GM12878 (cell line): ENCODE measurements at regions of chr17 and their contacts with region 1.

Region 1: DNA sequence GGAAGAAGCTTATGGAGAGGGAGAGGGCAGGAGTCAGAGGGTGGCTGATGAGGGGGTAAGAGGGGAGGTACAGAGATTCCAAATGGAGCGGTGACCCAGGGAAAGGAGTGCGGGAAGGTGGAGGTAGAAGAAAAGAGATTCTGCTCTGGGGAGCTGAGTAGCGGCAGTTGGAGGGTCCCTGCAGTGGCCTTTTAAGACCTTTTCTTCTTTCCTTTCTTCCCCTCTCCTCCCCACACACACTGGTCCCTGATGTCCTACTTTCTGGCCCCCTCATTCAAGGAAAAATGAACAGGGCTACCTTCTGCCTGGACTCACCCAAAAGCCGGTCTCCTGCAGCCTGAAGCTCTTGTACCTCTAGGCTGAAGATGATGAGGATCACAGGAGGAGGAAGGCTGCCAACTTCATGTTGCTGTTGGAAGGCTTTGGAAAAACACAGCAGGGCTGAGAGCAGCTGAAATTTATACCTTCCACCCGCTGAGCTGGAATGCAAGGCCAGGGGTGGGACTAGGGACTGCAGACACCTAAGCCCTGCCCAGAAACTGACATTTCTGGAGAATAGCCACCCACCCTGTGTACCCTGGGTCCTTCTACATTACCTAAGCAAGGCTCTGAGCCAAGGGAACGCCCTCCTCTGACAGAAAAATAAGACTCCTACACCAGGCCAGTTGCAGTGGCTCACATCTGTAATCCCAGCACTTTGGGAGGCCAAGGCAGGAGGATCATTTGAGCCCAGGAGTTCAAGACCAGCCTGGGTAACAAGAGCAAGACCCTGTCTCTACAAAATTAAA is 9.4 kb upstream of the HEATR6 start:
- DNase-seq: no peak
- ATAC-seq: no peak
- H3K4me3 ChIP-seq: no peak overlapping the region
- H3K27ac ChIP-seq: no peak overlapping the region
- H3K4me1 ChIP-seq: peaks cover 39% of the 10 kb centered on the region
- H3K27me3 ChIP-seq: no peaks in the 10 kb centered on the region
- CTCF ChIP-seq: no peak
- EP300 ChIP-seq: no peak
- POLR2A ChIP-seq: no peak
- RAD21 ChIP-seq: no peak

Region 2: DNA sequence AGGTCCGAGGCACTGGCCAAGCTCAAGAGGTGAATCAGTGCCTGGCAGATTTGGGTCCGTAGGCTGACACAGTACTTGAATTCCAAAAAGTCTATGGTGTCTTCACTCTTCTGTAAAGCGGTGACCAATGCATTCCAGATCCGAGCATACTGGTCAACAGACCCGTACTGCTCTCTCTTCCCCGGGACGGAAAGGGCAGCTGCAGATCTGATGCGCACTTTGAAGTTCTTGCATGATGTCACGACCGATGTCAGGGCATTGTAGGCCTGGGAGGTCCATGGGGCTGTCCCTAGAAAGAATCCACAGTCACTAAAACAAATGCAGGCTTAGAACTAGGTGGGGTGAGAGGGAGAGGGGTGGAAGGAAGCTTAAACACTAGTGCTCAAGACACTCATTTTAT is 44.2 kb before region 1 on chr17:
- CTCF ChIA-PET with region 1: no interaction called
- POLR2A ChIA-PET with region 1: no interaction called
- RAD21 ChIA-PET with region 1: no interaction called
- SMC1A ChIA-PET with region 1: no interaction called
- in situ Hi-C with region 1: no loop called
- intact Hi-C with region 1: no loop called
- DNase-seq: no peak
- ATAC-seq: no peak
- H3K4me3 ChIP-seq: no peak overlapping the region
- H3K27ac ChIP-seq: no peak overlapping the region
- H3K4me1 ChIP-seq: no peaks in the 10 kb centered on the region
- H3K27me3 ChIP-seq: no peaks in the 10 kb centered on the region
- CTCF ChIP-seq: no peak
- EP300 ChIP-seq: no peak
- POLR2A ChIP-seq: no peak
- RAD21 ChIP-seq: no peak

Region 3: DNA sequence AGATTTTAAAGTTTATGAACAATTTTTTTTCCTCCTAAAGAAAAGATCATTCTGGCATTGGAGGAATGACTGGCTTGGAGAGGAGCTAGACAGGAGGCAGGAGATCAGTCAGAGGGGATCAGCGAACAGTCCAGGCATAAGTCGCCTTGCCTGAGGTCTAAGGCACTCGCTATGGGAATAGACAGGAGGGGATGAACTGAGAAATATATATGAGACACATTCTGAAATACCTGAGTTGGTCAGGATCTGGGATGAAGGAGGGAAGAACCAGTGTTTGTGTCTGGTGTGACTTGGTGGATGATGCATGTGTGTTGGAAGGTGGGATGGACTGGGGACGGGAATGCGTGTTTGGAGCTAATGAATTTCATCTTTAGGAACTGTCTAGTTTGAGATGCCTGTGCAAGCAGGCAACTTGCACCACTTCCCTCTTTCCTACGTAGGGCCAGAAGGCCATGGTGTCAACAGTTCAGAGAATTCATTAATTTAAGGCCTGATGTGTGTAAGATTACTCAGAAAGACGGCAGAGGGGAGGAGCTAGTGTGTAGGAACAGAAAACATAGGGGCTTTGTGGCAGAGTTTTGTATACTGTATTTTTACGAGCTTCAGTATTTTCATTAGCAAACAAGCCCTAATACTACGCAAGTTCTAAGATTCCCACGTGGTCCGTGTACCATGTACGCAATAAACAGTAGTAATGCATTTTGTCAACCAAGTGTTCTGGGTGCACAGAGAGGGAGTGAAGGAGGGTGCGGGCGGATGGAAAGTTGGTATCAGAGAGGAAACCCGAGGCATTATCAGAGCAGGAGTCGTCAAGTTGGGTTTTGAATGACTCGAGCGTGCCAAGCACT is 10.2 kb before region 1 on chr17:
- CTCF ChIA-PET with region 1: interaction called, 46 read pairs
- POLR2A ChIA-PET with region 1: interaction called, 42 read pairs
- RAD21 ChIA-PET with region 1: interaction called, 17 read pairs
- SMC1A ChIA-PET with region 1: interaction called, 31 read pairs
- in situ Hi-C with region 1: no loop called
- intact Hi-C with region 1: no loop called
- DNase-seq: no peak
- ATAC-seq: peak; percentile 46
- H3K4me3 ChIP-seq: peak overlapping the region; percentile 60
- H3K27ac ChIP-seq: peak overlapping the region; percentile 45
- H3K4me1 ChIP-seq: peaks cover 12% of the 10 kb centered on the region
- H3K27me3 ChIP-seq: no peaks in the 10 kb centered on the region
- CTCF ChIP-seq: no peak
- EP300 ChIP-seq: no peak
- POLR2A ChIP-seq: no peak
- RAD21 ChIP-seq: no peak

Region 4: GRCh38 chr17:60106220-60107059 is 18.4 kb after region 1 on chr17:
- CTCF ChIA-PET with region 1: interaction called, 5 read pairs
- POLR2A ChIA-PET with region 1: interaction called, 9 read pairs
- RAD21 ChIA-PET with region 1: no interaction called
- SMC1A ChIA-PET with region 1: interaction called, 19 read pairs
- in situ Hi-C with region 1: no loop called
- intact Hi-C with region 1: no loop called
- DNase-seq: no peak
- ATAC-seq: peak; percentile 62
- H3K4me3 ChIP-seq: no peak overlapping the region
- H3K27ac ChIP-seq: no peak overlapping the region
- H3K4me1 ChIP-seq: peaks cover 11% of the 10 kb centered on the region
- H3K27me3 ChIP-seq: no peaks in the 10 kb centered on the region
- CTCF ChIP-seq: no peak
- EP300 ChIP-seq: no peak
- POLR2A ChIP-seq: no peak
- RAD21 ChIP-seq: no peak